OCI-LY7 (cell line): ENCODE measurements at regions of chr7 and their contacts with region 1.

Region 1: GRCh38 chr7:150988230-150989226 is 2.3 kb upstream of the NOS3 start:
- DNase-seq: peak; percentile 68
- H3K4me3 ChIP-seq: no peak overlapping the region
- H3K27ac ChIP-seq: no peak overlapping the region
- H3K4me1 ChIP-seq: peaks cover 11% of the 10 kb centered on the region
- CTCF ChIP-seq: peak; percentile 88

Region 2: DNA sequence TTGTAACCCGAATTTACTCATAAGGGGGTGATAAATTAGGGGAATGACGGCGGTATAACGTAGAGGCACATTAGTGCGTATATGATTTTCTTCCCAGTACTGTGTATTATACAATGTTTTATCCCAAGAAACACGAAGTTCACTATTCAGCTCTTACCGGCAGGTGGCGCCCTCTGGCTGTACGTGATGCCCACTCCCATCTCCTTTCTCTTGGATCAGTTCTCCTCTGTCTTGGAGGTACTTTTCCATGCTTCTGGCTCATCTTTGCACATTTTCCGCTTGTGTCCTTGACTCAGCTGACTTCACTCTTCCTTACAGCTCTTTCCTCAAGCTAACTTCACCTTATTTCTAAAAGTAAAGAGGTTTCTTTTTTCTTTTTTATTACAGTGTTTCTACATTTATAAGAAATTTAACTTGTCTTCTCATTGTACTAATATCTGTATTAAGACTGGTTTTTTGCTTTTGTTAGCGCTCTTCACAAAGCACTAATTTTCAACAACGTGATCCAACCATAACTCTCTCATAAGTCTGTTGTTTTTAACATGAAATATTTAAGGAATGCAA is 209.7 kb before region 1 on chr7:
- CTCF ChIA-PET with region 1: no interaction called
- POLR2A ChIA-PET with region 1: no interaction called
- intact Hi-C with region 1: loop called (anchors 1 kb)
- DNase-seq: peak; percentile 69
- H3K4me3 ChIP-seq: no peak overlapping the region
- H3K27ac ChIP-seq: no peak overlapping the region
- H3K4me1 ChIP-seq: no peaks in the 10 kb centered on the region
- CTCF ChIP-seq: peak; percentile 98

Region 3: GRCh38 chr7:150876817-150877526 is 111.6 kb before region 1 on chr7:
- CTCF ChIA-PET with region 1: interaction called, 5 read pairs
- POLR2A ChIA-PET with region 1: no interaction called
- intact Hi-C with region 1: loop called (anchors 2 kb)
- DNase-seq: peak; percentile 62
- H3K4me3 ChIP-seq: no peak overlapping the region
- H3K27ac ChIP-seq: no peak overlapping the region
- H3K4me1 ChIP-seq: peaks cover 17% of the 10 kb centered on the region
- CTCF ChIP-seq: peak; percentile 69

Region 4: DNA sequence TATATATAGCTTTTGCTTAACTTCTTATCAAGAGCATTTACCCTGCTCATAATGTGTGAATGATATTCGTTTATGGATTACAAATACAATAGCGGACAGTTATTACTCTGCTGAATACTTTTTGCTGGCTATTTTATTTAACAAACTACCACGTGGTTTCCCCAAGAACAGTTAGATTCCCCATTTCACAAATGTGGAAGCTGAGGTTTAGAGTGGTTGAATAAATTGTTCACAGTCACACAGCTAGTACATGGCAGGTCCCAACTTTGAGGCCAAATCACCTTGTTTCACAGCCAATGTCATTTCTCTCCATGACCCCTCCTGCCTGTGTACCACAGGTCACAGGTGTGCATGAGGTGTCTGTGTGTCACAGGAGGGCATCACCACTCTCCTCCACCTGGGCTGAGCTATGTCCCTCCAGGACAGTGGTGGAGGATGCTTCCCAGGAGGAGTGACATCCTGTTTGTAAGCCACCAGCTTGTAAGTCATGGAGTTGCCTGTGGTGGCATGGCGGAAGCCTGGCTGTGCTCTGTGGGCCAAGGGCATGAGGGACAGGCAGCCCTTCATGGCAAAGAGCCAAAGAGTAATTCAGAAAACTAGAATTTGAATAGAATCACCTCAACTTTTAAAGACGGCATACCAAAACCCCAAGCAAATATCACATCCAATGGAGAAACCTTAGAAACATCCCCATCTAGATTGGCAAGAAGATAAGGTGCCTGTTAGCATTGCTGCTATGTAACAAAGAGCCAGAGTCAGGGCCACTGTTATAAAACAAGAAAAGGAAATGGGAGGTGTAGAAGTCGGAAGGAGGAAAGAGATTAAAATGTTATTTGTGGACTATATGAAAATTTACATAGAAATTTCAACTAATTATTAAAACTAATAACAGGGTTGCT is 84.3 kb before region 1 on chr7:
- CTCF ChIA-PET with region 1: no interaction called
- POLR2A ChIA-PET with region 1: no interaction called
- intact Hi-C with region 1: no loop called
- DNase-seq: no peak
- H3K4me3 ChIP-seq: no peak overlapping the region
- H3K27ac ChIP-seq: no peak overlapping the region
- H3K4me1 ChIP-seq: peaks cover 31% of the 10 kb centered on the region
- CTCF ChIP-seq: no peak

Region 5: DNA sequence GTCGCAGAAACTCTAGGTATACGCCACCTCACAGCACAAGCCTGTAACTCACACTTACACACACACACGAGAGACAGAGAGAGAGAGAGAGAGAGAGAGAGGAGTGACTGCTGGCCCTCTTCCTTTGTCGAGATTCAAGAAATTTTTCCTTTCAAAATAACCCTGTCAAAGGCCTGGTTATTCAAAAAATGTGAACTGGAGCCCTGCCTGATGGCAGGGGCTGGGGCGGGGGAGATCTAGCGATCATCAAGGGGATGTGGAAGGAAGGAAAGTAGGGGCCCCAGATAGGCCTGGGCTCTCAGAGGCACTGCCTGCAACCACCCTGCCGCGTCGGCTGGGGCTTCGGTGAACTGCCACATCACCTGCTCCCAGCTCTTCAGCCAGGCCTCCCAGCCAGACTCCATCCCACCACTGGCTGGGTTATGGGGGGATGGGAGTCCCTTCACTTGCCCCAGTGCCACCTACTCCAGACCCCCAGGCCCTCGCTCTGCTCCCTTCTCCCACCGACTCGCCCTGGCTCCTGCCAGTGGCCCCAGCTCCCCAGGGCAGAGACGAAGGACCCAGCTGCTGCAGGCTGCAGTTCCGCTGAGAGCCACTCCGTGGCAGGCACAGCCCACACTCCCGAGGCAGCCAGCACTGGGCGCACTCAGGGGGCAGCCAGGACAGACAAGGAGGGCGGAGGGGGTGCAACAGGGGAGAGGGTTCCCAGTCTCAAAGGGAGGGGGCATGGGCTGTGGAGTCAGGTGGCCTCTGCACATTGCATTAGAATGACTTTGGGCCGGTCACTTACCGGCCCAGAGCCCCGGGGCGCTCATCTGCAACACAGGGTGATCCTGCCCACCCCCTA is 25.8 kb before region 1 on chr7:
- CTCF ChIA-PET with region 1: interaction called, 3 read pairs
- POLR2A ChIA-PET with region 1: no interaction called
- intact Hi-C with region 1: loop called (anchors 1 kb)
- DNase-seq: peak; percentile 72
- H3K4me3 ChIP-seq: no peak overlapping the region
- H3K27ac ChIP-seq: no peak overlapping the region
- H3K4me1 ChIP-seq: peaks cover 9% of the 10 kb centered on the region
- CTCF ChIP-seq: peak; percentile 91

Region 6: GRCh38 chr7:151585744-151586393 is 597.3 kb after region 1 on chr7:
- CTCF ChIA-PET with region 1: no interaction called
- POLR2A ChIA-PET with region 1: no interaction called
- intact Hi-C with region 1: no loop called
- DNase-seq: no peak
- H3K4me3 ChIP-seq: no peak overlapping the region
- H3K27ac ChIP-seq: no peak overlapping the region
- H3K4me1 ChIP-seq: no peaks in the 10 kb centered on the region
- CTCF ChIP-seq: no peak

Region 7: GRCh38 chr7:152723364-152723763 is 1734.8 kb after region 1 on chr7:
- CTCF ChIA-PET with region 1: interaction called, 10 read pairs
- POLR2A ChIA-PET with region 1: no interaction called
- intact Hi-C with region 1: no loop called
- DNase-seq: no peak
- H3K4me3 ChIP-seq: no peak overlapping the region
- H3K27ac ChIP-seq: no peak overlapping the region
- H3K4me1 ChIP-seq: no peaks in the 10 kb centered on the region
- CTCF ChIP-seq: no peak